Naive thymus-derived CD4-positive, alpha-beta T cell (primary cell): ENCODE measurements at regions of chr9 and their contacts with region 1.

Region 1: DNA sequence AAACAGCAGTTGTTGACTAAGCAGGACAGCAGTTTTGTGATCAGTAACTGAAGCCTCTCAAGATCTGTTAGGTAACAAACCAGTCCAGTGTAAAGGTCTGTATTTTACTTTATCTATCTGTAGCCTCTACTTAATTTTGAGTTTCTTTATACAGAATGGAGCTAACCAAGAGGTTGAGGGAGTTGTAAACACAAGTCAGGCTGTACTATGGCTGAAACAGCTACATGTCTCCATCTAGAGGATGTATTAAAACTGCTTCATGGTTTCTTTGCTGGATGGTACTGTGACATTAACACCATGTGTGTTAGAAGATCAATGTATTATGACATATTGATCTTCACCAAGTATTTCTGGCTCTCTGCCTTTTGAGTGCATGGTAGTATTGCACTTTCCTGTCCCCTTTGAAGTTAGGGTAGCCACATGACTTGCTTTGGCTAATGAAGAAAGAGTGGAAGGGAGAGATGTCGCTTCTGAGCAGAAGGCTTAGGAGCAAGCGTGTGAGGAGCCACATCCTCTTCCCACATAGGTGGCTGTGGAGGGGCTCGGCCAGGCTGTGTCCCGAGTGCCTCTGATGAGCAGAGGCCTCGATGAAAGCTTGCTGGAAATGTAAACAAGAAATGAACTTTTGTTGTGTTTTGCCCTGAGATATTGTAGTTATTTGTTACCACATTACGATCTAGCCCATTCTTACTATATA is 105.6 kb upstream of the PCA3 start:
- DNase-seq: peak in 4 of 9 donors; percentile 21 to 44 (median 25)
- ATAC-seq: peak; percentile 86
- H3K4me3 ChIP-seq: no peak overlapping the region
- H3K4me3 Mint-ChIP-seq: no peak overlapping the region
- H3K27ac ChIP-seq: no peak overlapping the region
- H3K27ac Mint-ChIP-seq: no peak overlapping the region
- H3K4me1 ChIP-seq: peaks cover 0 to 13% of the 10 kb centered on the region in 2 donors
- H3K4me1 Mint-ChIP-seq: peaks cover 0 to 52% (median 12%) of the 10 kb centered on the region in 7 donors
- H3K27me3 ChIP-seq: no peaks in the 10 kb centered on the region
- H3K27me3 Mint-ChIP-seq: peaks cover 0 to 18% (median 0%) of the 10 kb centered on the region in 5 donors

Region 2: GRCh38 chr9:75974016-75974766 is 684.5 kb before region 1 on chr9:
- CTCF ChIA-PET with region 1: no interaction called
- POLR2A ChIA-PET with region 1: no interaction called
- intact Hi-C with region 1: no loop called
- DNase-seq: no peak
- ATAC-seq: no peak
- H3K4me3 ChIP-seq: no peak overlapping the region
- H3K4me3 Mint-ChIP-seq: peak overlapping the region in 1 of 10 donors; percentile 27
- H3K27ac ChIP-seq: no peak overlapping the region
- H3K27ac Mint-ChIP-seq: peak overlapping the region in 5 of 9 donors; percentile 12 to 61 (median 57)
- H3K4me1 ChIP-seq: peaks cover 0 to 9% of the 10 kb centered on the region in 2 donors
- H3K4me1 Mint-ChIP-seq: peaks cover 4 to 67% (median 52%) of the 10 kb centered on the region in 7 donors
- H3K27me3 ChIP-seq: no peaks in the 10 kb centered on the region
- H3K27me3 Mint-ChIP-seq: no peaks in the 10 kb centered on the region

Region 3: GRCh38 chr9:76704593-76705204 is 46.0 kb after region 1 on chr9:
- CTCF ChIA-PET with region 1: interaction called, 3 read pairs
- POLR2A ChIA-PET with region 1: no interaction called
- intact Hi-C with region 1: loop called in 1 of 2 experiments (anchors 5 kb)
- DNase-seq: peak in 7 of 9 donors; percentile 12 to 55 (median 35)
- ATAC-seq: peak; percentile 63
- H3K4me3 ChIP-seq: no peak overlapping the region
- H3K4me3 Mint-ChIP-seq: no peak overlapping the region
- H3K27ac ChIP-seq: no peak overlapping the region
- H3K27ac Mint-ChIP-seq: no peak overlapping the region
- H3K4me1 ChIP-seq: no peaks in the 10 kb centered on the region
- H3K4me1 Mint-ChIP-seq: peaks cover 0 to 16% (median 1%) of the 10 kb centered on the region in 7 donors
- H3K27me3 ChIP-seq: no peaks in the 10 kb centered on the region
- H3K27me3 Mint-ChIP-seq: peaks cover 35 to 51% (median 40%) of the 10 kb centered on the region in 5 donors